AG04450 (cell line): ENCODE measurements at regions of chr11 and their contacts with region 1.

Region 1: DNA sequence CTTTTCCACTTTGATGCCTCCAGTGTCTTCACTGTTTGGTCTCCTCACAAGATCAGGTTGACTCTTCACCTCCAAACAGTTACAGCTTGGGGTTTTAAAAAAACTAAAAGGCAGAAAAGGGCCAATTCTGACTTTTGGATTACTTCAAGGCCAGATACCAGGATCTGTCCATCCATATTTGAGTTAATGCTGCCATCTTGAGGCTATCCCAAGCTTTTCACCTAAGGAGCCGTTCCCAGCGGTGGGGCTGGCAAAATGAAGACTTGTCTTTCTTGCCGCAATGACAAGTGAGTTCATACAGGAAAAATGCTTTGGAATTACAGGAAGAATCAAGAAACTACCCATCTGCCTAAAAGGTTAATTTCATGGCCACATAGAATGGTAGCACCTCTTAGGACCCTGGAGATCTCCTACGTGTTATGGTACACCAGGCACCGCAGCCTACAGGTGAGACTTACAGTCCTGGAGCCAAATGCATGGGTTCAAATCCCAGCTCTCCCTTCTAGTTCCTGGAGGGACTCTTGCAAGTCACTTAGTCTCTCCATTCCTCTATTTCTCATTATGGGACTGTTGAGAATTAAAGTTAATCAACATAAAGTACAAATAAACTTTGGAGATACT is 6.0 kb upstream of the OR5B21 start:
- DNase-seq: peak; percentile 52
- H3K4me3 ChIP-seq: no peak overlapping the region
- H3K27ac ChIP-seq: no peak overlapping the region
- H3K27me3 ChIP-seq: no peaks in the 10 kb centered on the region
- CTCF ChIP-seq: peak; percentile 75

Region 2: GRCh38 chr11:57751676-57752253 is 762.1 kb before region 1 on chr11 and contains the start of gene BTBD18:
- CTCF ChIA-PET with region 1: interaction called, 18 read pairs
- POLR2A ChIA-PET with region 1: no interaction called
- DNase-seq: no peak
- H3K4me3 ChIP-seq: no peak within 1 kb of the TSS
- H3K27ac ChIP-seq: no peak within 1 kb of the TSS
- H3K27me3 ChIP-seq: no peaks in the 10 kb centered on the region
- CTCF ChIP-seq: peak; percentile 56
- polyA plus RNA-seq, gene BTBD18: not detected in 2 replicates

Region 3: GRCh38 chr11:57815476-57815875 is 698.4 kb before region 1 on chr11:
- CTCF ChIA-PET with region 1: interaction called, 10 read pairs
- POLR2A ChIA-PET with region 1: no interaction called
- DNase-seq: no peak
- H3K4me3 ChIP-seq: no peak overlapping the region
- H3K27ac ChIP-seq: no peak overlapping the region
- H3K27me3 ChIP-seq: no peaks in the 10 kb centered on the region
- CTCF ChIP-seq: no peak

Region 4: GRCh38 chr11:58059007-58059350 is 454.9 kb before region 1 on chr11:
- CTCF ChIA-PET with region 1: interaction called, 14 read pairs
- POLR2A ChIA-PET with region 1: no interaction called
- DNase-seq: peak; percentile 81
- H3K4me3 ChIP-seq: no peak overlapping the region
- H3K27ac ChIP-seq: peak overlapping the region; percentile 97
- H3K27me3 ChIP-seq: no peaks in the 10 kb centered on the region
- CTCF ChIP-seq: no peak

Region 5: GRCh38 chr11:58524232-58525036 is 10.6 kb after region 1 on chr11:
- CTCF ChIA-PET with region 1: interaction called, 67 read pairs
- POLR2A ChIA-PET with region 1: no interaction called
- DNase-seq: peak; percentile 80
- H3K4me3 ChIP-seq: no peak overlapping the region
- H3K27ac ChIP-seq: no peak overlapping the region
- H3K27me3 ChIP-seq: no peaks in the 10 kb centered on the region
- CTCF ChIP-seq: peak; percentile 89

Region 6: DNA sequence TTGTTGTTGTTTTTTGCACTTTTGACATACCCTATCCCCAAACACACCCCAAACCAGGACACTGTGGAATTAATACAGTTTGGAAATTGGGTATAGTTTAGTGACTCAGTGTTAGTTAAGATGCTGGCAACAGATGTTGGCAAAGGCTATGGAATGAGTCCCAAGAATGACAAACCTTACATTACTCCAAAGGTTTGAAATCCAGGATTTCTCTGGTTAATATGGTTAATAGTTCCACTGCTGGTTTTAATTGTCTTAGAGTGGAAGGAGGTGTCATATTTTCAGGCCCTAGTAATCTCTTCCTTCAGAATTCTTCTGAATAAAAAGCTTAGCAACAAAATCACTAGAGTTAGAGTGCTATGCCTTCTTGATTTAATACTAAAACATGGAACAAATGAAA is 61.0 kb after region 1 on chr11:
- CTCF ChIA-PET with region 1: no interaction called
- POLR2A ChIA-PET with region 1: no interaction called
- DNase-seq: no peak
- H3K4me3 ChIP-seq: no peak overlapping the region
- H3K27ac ChIP-seq: no peak overlapping the region
- H3K27me3 ChIP-seq: no peaks in the 10 kb centered on the region
- CTCF ChIP-seq: no peak